Vagina (tissue), 2 donors: ENCODE measurements at regions of chr22 and their contacts with region 1.

Region 1: DNA sequence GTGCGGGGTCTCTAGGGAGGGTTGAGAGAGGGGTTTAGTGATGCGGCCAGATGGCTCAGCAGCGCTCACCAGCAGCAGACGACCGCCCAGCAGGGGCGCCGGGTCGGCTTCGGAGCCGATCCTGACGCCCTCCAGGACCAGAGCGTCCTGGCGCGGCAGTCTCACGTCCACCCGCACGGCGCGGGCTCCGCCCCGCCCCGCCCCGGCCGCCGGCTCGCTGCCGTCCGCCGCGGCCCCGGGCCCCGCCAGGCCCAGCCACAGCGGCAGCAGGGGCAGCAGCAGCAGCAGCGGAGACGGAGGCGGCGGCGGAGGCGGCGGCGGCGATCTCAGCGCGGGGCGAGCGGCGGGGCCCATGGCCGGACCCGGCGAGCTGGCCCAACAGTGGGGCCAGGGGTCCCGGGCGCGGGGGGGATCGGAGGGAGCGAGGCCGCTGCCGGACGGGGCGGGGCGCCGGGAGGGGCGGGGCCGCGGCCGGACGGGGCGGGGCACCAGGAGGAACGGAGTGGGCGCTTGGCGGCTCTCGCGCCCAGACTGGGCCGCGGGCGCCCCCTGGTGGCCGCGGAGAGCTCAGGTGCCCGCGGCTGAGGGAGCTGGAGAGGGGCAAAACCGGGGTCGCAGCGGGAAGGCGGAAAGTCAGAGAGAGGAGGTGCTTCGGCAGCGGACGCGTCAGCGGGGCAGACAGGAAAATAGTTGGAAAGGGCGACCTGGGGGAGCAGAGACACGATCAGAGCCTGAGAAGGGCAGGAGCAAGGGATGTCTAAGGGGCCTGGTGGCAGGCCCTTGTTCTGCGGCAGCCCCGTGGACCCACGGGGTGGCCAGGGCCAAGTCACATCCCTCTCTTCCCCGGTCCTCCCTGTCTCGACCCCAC is at the start of gene RNF215:
- DNase-seq: no peak
- H3K4me3 ChIP-seq: peak within 1 kb of the TSS; percentile 49 to 51
- H3K27ac ChIP-seq: peak within 1 kb of the TSS; percentile 31
- H3K4me1 ChIP-seq: peaks cover 12% of the 10 kb centered on the region
- H3K27me3 ChIP-seq: no peaks in the 10 kb centered on the region
- CTCF ChIP-seq: peak; percentile 91 to 94 (median 92)
- POLR2A ChIP-seq: no peak
- total RNA-seq, gene RNF215: 17.4 TPM

Region 2: DNA sequence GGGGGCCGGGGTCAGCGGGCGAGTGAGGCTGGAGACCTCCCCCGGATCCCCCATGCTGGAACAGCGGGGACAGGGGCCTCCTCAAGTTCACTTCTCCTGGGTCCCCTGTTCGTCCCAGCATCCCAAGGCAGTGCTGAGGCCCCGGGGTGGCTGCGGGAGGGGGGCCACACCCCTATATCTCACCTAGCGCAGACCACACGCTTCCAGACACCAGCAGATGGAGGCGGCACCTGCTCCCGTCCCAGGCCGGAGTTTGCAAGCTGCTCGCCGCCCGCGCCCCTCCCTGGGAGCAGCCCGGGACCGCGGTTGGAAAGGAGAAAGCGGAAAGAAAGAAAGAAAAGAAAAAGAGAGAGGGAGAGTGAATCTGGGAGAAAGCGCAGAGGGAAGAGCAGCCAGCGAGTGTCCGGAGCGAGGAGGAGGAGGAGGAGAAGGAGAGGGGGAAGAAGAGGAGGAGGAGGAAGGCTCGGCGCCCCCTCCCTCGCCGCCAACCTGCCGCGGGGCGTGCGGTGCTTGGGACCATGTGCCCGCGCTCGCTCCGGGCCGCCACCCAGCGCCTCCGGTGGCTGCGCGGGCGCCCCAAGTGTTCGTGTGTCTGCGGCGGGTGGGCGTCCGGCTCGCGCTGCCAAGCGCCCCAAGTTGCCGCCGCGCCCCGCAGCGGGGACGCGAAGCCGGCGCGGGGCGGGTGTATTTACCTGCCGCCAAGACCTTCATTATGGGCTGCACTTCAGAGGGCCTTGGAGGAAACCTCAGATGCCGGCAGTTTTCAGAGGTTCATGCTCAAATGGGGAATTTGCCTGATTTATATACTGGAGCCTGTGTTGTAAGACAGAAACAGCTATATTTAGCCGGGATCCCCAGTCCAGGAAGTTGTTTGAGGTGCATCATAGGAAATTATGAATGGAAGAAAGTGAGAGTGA is 141.0 kb before region 1 on chr22 and contains the start of gene LIF:
- intact Hi-C with region 1: no loop called
- DNase-seq: no peak
- H3K4me3 ChIP-seq: peak within 1 kb of the TSS; percentile 52 to 55
- H3K27ac ChIP-seq: peak within 1 kb of the TSS; percentile 57
- H3K4me1 ChIP-seq: peaks cover 52% of the 10 kb centered on the region
- H3K27me3 ChIP-seq: no peaks in the 10 kb centered on the region
- CTCF ChIP-seq: peak in 1 of 3 experiments; percentile 14
- POLR2A ChIP-seq: no peak
- total RNA-seq, gene LIF: 0.49 TPM

Region 3: GRCh38 chr22:30262917-30263741 is 124.1 kb before region 1 on chr22:
- intact Hi-C with region 1: loop called (anchors 5 kb)
- DNase-seq: no peak
- H3K4me3 ChIP-seq: no peak overlapping the region
- H3K27ac ChIP-seq: peak overlapping the region; percentile 17
- H3K4me1 ChIP-seq: peaks cover 23% of the 10 kb centered on the region
- H3K27me3 ChIP-seq: no peaks in the 10 kb centered on the region
- CTCF ChIP-seq: peak; percentile 98 to 99 (median 98)
- POLR2A ChIP-seq: no peak

Region 4: DNA sequence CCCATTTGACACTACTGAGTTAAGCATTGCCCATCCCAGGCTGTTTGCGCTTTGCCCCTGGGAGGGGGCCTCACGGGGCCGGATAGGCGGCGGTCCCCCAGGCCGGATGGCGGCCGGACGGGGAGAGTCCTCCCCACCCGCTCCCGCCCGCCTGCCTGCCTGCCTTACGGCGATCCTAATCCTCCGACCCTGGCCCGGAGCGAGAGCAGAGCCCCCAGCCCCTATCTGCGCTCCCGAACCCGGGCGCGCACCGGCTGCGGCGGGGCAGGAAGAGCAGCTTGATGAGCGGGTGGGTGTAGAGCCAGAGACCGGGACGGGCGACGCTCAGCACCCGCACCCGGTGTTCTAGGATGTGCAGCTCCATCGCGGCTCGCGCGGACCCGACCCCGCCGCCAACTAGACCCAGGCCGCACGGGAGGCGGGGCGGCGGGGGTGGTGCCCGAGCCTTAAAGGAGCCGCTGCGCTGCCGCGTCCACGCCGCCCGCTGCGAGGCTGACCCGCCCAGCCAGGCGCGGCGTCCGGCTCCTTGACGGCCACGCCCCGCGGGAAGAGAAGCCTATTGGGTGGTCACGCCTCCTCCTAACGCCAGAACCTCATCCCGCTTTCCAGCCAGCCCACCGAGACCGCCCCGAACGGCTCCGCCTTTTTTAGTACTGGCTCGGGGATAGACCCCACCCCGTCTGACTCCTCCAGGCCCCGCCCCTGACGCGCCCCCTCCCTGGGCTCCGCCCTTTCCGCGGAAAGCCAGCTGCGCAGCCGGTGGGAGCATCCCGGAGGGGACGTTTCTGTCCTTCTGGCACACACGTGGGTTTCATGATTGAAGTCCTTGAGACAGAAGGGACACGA is 97.8 kb before region 1 on chr22 and contains the start of gene CASTOR1:
- intact Hi-C with region 1: loop called (anchors 2 kb)
- DNase-seq: peak in 1 of 2 donors; percentile 99
- H3K4me3 ChIP-seq: peak within 1 kb of the TSS; percentile 99 to 100
- H3K27ac ChIP-seq: peak within 1 kb of the TSS; percentile 97
- H3K4me1 ChIP-seq: peaks cover 60% of the 10 kb centered on the region
- H3K27me3 ChIP-seq: no peaks in the 10 kb centered on the region
- CTCF ChIP-seq: no peak
- POLR2A ChIP-seq: peak in 1 of 2 donors; percentile 86
- total RNA-seq, gene CASTOR1: 51.8 TPM